WTC11 (cell line): ENCODE measurements at regions of chr7 and their contacts with region 1.

Region 1: DNA sequence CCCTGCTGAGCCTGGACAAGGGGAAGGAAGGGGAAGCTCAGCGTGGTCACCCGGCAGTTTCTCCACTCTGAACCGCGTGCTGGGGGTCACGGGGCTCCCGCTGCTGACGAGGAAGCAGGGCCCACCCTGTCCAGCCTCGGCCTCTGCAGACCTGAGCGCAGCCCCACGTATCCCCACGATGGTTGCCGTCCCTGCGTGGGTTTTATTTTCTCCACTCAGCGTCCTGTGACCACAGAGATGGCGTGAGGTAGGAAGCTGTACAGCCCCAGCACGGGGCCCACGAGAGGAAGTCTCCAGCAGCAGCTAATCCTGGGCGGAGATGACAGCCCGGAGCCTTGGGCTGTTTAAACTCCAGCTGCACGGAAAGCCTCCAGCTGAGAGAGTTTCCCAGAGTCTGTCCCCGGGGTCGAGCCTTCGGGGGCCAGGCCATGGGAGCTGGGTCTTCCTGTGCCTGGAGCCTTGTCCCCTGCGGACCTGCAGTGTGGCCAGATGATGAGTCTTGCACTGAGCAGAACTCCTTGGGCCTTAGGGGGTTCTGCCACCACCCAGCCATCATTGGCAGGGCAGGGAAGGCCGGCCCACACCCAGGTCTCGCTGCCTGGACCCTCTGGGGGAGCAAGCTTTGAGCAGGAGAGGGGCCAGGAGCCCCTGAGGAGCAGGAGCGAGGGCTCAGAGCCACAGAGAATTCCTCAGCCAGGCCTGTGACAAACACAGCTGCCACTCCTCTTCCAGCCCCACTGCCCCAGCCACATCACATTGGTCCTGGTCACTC is 72.8 kb upstream of the FAM20C start:
- DNase-seq: no peak
- ATAC-seq: no peak; the same call in 1 of the 2 replicates
- H3K4me3 Mint-ChIP-seq: no peak overlapping the region
- H3K27ac Mint-ChIP-seq: no peak overlapping the region
- H3K4me1 Mint-ChIP-seq: peaks cover 56% of the 10 kb centered on the region
- H3K27me3 Mint-ChIP-seq: peaks cover 15% of the 10 kb centered on the region
- CTCF ChIP-seq: no peak

Region 2: DNA sequence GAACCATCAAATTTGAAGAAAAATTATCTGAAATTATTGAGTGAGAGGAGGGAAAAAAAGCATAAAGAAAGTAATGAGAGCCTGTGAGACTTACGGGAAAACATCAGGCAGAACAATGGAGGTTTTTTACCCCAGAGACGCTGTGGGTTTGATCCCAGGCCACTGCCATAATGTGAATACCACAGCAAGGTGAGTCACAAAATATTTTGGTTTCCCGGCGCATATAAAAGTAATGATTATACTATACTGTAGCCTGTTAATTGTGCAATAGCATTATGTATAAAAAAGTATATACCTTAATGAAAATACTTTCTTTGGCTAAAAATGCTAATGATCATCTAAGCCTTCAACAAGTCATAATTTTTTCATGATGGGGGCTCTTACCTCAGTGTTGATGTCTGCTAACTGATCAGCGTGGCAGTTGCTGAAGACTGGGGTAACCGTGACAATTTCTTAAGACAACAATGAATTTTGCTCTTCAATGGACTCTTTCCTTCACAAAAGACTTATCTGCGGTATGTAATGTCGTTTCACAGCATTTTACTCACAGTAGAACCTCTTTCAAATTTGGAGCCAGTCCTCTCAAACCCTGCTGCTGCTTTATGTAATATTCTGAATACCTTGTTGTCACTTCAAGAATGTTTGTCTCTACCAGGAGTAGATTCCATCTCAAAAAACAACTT is 24.3 kb before region 1 on chr7:
- CTCF ChIA-PET with region 1: interaction called, 14 read pairs
- POLR2A ChIA-PET with region 1: no interaction called
- DNase-seq: no peak
- ATAC-seq: no peak
- H3K4me3 Mint-ChIP-seq: peak overlapping the region; percentile 54
- H3K27ac Mint-ChIP-seq: peak overlapping the region; percentile 96
- H3K4me1 Mint-ChIP-seq: peaks cover 89% of the 10 kb centered on the region
- H3K27me3 Mint-ChIP-seq: no peaks in the 10 kb centered on the region; the same call in 1 of the 2 replicates
- CTCF ChIP-seq: no peak

Region 3: DNA sequence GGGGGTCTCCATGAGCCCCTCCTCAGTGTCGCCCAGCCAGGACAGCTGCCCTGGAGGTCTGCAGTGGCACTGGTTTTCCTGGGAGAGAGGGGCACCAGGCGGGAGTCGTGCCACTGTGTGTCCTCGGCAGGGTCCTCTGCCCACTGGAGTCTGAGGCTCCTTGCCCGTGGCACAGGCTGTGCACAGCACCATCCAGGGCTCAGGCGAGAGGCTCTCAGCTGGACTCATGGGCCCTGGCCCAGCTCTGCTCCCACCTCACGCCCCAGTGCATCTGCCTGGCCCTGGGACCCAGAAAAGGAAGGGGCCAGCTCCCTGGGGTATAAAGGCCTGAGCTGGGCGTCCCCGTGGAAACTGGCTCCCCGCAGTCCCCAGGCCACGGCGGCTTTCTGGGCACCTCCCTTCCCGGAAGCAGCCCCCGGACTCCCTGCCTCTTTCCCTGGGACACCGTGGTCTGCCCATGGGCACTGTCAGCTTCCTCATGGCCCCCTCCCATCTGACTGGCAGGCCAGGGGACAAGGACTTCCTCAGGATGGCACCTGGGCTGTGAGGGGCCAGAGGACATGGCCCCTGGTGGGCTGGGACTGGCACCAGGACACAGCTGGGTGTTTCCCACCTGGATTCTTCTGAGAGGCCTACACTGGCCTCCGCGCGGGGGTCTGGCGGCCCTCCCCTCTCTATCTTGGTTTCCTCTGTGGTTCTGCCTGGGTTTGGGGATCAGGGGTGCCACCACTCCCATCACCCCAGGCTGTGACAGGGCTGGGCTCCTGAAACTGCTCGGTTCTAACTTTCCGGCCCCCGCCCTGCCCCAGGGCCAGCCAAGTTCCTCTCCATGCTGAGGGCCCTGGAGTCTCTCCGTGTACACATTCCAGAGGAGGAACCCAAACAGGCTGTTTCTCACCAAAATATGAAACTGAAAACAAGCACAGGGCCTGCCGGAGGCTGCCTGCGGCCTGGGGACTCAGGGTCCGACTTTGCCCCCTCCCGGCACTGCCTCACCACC is 175.9 kb after region 1 on chr7:
- CTCF ChIA-PET with region 1: no interaction called
- POLR2A ChIA-PET with region 1: no interaction called
- DNase-seq: no peak
- ATAC-seq: no peak
- H3K4me3 Mint-ChIP-seq: no peak overlapping the region
- H3K27ac Mint-ChIP-seq: no peak overlapping the region
- H3K4me1 Mint-ChIP-seq: no peaks in the 10 kb centered on the region
- H3K27me3 Mint-ChIP-seq: peaks cover 27% of the 10 kb centered on the region
- CTCF ChIP-seq: no peak